Activated CD4-positive, alpha-beta T cell treated with anti-CD3 and anti-CD28 coated beads, Interleukin-2, amount 10 ng/mL, durations not matched to agents 7 days and 5 days (primary cell): ENCODE measurements at regions of chrX and their contacts with region 1.

Region 1: GRCh38 chrX:68828740-68829552 is at the start of gene EFNB1:
- DNase-seq: peak; percentile 88
- H3K4me3 Mint-ChIP-seq: peak within 1 kb of the TSS; percentile 84
- H3K27ac Mint-ChIP-seq: peak within 1 kb of the TSS; percentile 86
- H3K4me1 Mint-ChIP-seq: peaks cover 21% of the 10 kb centered on the region
- H3K27me3 Mint-ChIP-seq: peaks cover 3% of the 10 kb centered on the region
- total RNA-seq, gene EFNB1: 3.8 to 4.6 TPM

Region 2: DNA sequence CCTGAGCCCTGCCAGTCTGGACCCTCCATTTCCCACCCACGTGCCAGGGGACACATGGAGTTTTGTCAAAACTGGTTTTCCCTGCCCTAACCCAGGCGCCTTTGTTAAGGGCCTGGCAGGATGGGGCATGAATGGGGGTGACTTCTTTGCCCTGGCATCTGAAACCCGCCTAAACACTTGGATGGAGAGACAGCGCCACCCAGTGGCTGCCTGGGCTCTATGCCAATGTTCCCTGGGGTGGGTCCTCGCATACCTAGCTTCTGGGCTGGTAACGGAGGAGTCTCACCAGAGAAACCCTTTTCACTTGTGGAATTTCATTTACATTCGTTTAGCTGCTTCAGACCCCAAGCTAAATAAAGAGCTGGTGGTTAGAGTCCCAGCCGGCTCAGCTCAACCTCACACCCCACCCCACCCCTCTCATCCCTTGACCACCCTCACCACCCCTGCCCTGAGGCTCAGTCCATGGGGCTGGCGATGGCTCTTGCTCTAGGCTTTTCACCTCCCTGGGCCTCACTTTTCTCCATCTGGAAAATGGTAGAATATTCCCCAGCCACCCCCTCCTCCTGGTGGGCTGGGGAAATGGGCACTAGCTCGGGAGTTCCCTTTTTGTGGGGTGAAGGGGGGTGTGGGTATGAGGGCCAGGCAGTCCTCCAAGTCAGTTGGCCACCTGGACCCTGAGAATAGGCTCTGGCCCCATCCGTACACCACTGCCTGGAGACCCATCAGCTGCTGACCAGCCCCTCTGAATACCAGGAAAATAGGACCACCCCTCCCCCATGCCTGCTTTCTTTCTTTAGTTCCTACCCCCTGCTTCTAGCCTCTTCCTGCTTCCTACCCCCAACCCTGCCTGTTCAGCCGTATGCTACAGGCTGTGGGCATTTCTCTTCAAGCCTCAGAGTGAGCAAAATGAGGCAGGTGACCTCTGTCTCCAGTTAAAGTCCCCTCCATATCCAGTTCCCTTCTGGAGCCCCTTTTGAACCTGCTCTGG is 393.5 kb after region 1 on chrX:
- CTCF ChIA-PET with region 1: interaction called, 10 read pairs
- POLR2A ChIA-PET with region 1: no interaction called
- DNase-seq: peak; percentile 71
- H3K4me3 Mint-ChIP-seq: no peak overlapping the region
- H3K27ac Mint-ChIP-seq: no peak overlapping the region
- H3K4me1 Mint-ChIP-seq: no peaks in the 10 kb centered on the region
- H3K27me3 Mint-ChIP-seq: no peaks in the 10 kb centered on the region